PC-9 (cell line): ENCODE measurements at regions of chr14 and their contacts with region 1.

Region 1: DNA sequence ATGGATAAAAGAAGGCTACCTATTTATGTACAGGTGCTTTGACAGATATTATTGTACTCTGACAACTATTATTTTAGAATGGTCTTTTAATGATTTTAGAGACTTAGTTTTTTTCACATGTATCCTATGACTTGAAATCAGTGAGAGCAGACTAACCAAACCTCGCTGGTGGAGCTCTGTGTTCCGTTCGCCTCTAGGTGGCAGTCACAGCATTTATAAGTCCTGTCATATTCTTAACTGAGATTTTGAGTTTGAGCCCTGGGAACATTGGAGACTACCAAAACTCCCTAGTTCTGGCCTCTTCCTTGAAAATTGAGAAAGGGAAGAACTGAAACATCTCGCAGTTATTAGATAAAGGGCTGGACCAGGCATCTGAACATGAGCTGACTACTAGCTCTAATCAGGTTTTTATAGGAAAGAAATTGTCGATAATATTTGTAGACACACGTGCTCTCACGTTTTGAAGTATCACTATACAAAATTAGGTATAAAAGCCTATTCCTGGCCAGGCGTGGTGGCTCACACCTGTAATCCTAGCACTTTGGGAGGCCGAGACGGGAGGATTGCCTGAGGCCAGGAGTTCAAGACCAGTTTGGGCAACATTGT is 48.3 kb downstream of the TTLL5 start:
- DNase-seq: peak; percentile 49 to 58
- H3K4me3 ChIP-seq: no peak overlapping the region
- H3K27ac ChIP-seq: no peak overlapping the region
- H3K4me1 ChIP-seq: peaks cover 30% of the 10 kb centered on the region
- H3K27me3 ChIP-seq: no peaks in the 10 kb centered on the region
- CTCF ChIP-seq: peak; percentile 87

Region 2: DNA sequence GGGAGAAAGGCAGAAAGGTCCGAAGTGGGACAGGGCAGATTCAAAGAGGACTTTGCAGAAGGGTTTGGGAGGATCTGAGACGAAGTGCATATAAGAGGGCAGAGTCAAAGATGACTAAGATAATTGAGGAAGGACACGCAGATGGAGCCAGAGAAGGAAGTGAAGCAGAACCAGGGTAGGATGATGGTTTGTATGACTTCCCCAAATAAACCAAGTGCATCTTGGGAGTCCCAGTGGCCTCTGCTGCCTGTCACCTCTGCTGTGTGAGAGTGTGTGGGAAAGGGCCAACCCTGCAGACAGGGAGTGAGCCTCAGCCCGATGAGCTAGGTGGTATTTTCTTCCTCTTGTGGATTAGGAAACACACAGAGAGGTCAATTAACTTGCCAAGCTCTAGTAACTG is 94.1 kb before region 1 on chr14:
- CTCF ChIA-PET with region 1: no interaction called
- POLR2A ChIA-PET with region 1: interaction called, 14 read pairs
- intact Hi-C with region 1: no loop called
- DNase-seq: no peak
- H3K4me3 ChIP-seq: no peak overlapping the region
- H3K27ac ChIP-seq: no peak overlapping the region
- H3K4me1 ChIP-seq: no peaks in the 10 kb centered on the region
- H3K27me3 ChIP-seq: no peaks in the 10 kb centered on the region
- CTCF ChIP-seq: no peak

Region 3: DNA sequence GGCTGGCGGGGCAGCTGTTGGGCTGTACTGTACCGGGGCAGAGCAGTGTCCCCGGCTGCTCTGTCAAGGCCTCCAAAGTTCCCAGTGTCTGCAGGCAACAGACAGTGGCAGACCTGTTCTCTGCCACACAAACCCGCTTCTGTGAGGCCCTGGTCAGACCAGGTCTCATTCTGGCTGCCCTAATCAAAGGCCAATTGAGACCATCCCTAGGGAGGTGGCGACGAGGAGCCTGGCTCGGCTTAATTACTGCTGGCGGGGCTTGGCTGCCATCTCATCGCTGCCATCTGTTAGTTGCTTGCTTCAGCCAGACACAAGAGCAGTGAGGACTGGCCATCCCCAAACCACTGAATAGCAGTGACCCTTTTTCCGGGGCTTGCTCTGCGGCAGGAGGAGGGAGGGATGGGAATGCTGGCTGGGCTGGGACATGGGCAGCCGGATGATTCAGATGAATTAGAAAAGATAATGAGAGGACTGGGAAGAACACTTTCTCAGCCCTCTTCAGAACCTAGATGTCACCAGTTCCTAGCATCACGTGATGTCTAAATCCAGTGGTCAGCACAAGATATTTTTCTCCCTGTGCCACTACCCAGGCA is 73.1 kb before region 1 on chr14:
- CTCF ChIA-PET with region 1: no interaction called
- POLR2A ChIA-PET with region 1: interaction called, 17 read pairs
- intact Hi-C with region 1: no loop called
- DNase-seq: peak in 1 of 2 experiments; percentile 45
- H3K4me3 ChIP-seq: no peak overlapping the region
- H3K27ac ChIP-seq: peak overlapping the region; percentile 71
- H3K4me1 ChIP-seq: peaks cover 42% of the 10 kb centered on the region
- H3K27me3 ChIP-seq: no peaks in the 10 kb centered on the region
- CTCF ChIP-seq: no peak

Region 4: DNA sequence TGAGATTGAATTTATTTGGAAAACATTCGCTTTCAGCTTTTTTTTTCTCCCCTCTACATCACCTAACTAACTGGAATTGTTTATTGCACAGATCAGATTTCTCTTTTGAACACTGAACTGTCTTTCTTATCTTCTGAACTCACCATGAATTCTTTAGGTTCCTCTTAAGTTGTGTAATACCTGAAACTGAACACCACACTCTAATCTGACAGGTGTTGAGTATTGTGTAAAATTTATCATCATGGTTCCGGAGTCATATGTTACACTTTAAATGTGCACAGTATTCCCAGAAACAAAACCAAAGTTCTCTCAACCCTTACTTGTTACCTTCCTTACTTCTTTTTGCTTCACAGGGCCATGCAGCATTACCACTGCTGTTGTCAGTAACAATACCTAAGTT is 205.8 kb after region 1 on chr14:
- CTCF ChIA-PET with region 1: no interaction called
- POLR2A ChIA-PET with region 1: no interaction called
- intact Hi-C with region 1: loop called (anchors 5 kb)
- DNase-seq: peak in 1 of 2 experiments; percentile 67
- H3K4me3 ChIP-seq: no peak overlapping the region
- H3K27ac ChIP-seq: no peak overlapping the region
- H3K4me1 ChIP-seq: peaks cover 8% of the 10 kb centered on the region; the same call in 1 of the 2 replicates
- H3K27me3 ChIP-seq: no peaks in the 10 kb centered on the region
- CTCF ChIP-seq: no peak

Region 5: GRCh38 chr14:76101377-76102010 is 392.2 kb after region 1 on chr14:
- CTCF ChIA-PET with region 1: no interaction called
- POLR2A ChIA-PET with region 1: no interaction called
- intact Hi-C with region 1: no loop called
- DNase-seq: no peak
- H3K4me3 ChIP-seq: no peak overlapping the region
- H3K27ac ChIP-seq: no peak overlapping the region
- H3K4me1 ChIP-seq: no peaks in the 10 kb centered on the region
- H3K27me3 ChIP-seq: peaks cover 90% of the 10 kb centered on the region
- CTCF ChIP-seq: no peak